ENCODE measurements at regions of chr2 and their contacts with region 1.

Region 1: DNA sequence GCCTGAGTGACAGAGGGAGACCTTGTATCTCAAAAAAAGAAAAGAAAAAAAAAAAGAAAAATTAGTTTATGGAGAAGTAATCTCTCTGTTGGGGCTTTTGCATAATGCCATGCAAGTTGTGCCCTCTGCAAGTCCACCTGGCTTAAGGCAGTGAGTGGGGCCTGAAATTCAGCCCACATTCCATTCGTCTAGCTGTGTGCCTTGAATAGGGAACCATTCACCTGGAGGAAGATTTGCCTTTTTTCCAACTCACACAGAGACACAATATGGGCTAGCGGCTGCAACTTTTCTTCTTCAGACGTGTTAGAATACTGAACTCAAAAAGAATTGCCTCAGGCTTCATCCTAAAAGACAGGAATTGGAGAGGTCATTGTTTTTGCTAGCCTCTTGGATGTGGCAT is 160.0 kb upstream of the STON1 start:
- DNase-seq: no peak
- H3K4me3 Mint-ChIP-seq: no peak overlapping the region
- H3K27ac Mint-ChIP-seq: no peak overlapping the region
- H3K4me1 Mint-ChIP-seq: peaks cover 12% of the 10 kb centered on the region
- H3K27me3 Mint-ChIP-seq: no peaks in the 10 kb centered on the region

Region 2: DNA sequence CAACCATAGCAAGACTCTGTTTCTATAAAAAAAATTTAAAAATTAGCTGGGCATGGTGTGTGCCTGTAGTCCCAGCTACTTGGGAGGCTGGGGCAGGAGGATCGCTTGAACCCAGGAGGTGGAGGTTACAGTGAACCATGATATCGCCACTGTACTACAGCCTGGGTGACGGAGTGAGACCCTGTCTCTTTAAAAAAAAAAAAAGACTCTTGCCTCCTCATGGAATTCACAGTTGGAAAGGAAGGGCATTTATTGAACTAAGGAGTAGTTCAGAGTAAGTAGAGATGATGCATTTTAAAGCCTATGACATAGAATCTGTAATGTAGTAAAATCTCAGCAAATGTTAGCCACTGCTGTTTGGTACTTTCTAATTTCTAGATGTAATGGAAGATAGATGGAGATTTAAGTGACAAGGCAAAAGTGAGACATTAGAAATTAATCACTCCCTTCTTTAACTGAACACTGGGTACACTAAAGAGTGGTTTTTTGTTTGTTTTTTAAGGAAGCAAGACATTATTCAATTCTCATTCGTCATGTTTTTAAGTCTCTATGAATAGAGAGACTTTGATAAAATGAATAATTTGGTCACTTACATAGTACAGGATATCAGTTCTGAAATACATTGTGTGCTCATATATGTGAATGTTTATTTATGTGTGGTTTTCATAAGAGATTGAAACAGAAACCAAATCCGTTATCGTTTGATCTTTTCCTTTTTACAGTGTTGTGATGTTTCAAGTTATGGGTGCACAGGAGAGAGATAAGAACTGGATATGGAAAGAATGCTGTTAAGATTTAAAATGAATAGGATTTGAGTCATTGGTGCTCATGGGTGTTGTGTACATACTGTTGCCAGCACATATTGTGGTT is 26.2 kb before region 1 on chr2:
- CTCF ChIA-PET with region 1: no interaction called
- intact Hi-C with region 1: no loop called
- DNase-seq: no peak
- H3K4me3 Mint-ChIP-seq: peak overlapping the region; percentile 8
- H3K27ac Mint-ChIP-seq: peak overlapping the region; percentile 47
- H3K4me1 Mint-ChIP-seq: peaks cover 37% of the 10 kb centered on the region
- H3K27me3 Mint-ChIP-seq: no peaks in the 10 kb centered on the region

Region 3: GRCh38 chr2:48356701-48357325 is 13.2 kb before region 1 on chr2:
- CTCF ChIA-PET with region 1: no interaction called
- intact Hi-C with region 1: loop called (anchors 2 kb)
- DNase-seq: peak; percentile 40
- H3K4me3 Mint-ChIP-seq: peak overlapping the region; percentile 54
- H3K27ac Mint-ChIP-seq: peak overlapping the region; percentile 87
- H3K4me1 Mint-ChIP-seq: peaks cover 55% of the 10 kb centered on the region
- H3K27me3 Mint-ChIP-seq: no peaks in the 10 kb centered on the region

Region 4: GRCh38 chr2:48383046-48383445 is 13.1 kb after region 1 on chr2:
- CTCF ChIA-PET with region 1: no interaction called
- intact Hi-C with region 1: no loop called
- DNase-seq: no peak
- H3K4me3 Mint-ChIP-seq: no peak overlapping the region
- H3K27ac Mint-ChIP-seq: no peak overlapping the region
- H3K4me1 Mint-ChIP-seq: no peaks in the 10 kb centered on the region
- H3K27me3 Mint-ChIP-seq: no peaks in the 10 kb centered on the region

Region 5: DNA sequence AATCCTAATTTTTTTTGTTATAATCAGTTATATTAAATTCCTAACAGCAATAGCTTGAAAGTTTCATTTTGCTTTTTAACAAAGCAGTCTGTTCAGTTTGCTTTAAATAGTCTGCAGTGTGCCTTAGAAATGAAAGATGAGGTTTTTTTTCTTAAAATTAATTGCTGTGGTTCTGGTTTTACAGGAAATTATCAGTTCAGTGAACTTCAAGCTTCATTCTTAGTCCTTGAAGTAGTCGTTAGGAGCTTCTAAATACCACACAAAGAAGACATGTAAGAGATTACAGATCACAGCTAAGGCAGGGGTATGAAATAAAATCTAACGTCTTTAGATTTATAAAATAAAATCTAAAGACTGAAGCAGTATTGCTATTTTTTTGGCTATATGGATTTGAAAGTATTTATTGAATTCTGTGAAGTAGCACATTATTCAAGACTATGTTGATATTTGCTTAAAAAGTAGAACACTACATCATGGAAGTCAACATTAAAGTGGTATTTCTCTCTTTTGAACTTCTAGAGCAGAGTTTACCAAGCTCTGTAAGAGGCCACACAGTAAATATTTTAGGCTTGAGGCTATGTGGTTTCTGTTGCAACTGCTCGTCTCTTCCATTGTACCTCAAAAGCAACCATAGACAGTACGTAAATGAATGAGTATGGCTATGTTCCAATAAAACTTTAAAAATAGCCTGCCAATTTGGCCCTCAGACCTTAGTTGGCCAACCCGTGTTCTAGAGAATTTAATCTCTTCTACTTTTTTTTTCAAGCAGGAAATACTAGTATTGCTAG is 78.5 kb after region 1 on chr2:
- CTCF ChIA-PET with region 1: no interaction called
- intact Hi-C with region 1: no loop called
- DNase-seq: no peak
- H3K4me3 Mint-ChIP-seq: peak overlapping the region; percentile 46
- H3K27ac Mint-ChIP-seq: peak overlapping the region; percentile 84
- H3K4me1 Mint-ChIP-seq: peaks cover 48% of the 10 kb centered on the region
- H3K27me3 Mint-ChIP-seq: no peaks in the 10 kb centered on the region

Region 6: DNA sequence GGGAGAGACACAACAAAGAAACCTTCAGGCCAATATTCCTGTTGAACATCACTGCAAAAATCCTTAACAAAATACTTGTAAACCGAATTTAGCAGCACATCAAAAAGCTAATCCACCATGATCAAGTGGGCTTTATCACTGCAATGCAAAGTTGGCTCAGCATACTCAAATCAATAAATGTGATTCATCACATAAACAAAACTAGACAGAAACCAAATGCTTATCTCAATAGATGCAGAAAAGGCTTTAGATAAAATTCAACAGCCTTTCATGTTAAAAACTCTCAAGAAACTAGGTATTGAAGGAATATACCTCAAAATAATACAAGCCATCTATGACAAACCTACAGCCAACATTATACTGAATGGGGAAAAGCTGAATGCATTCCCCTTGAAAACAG is 268.3 kb after region 1 on chr2:
- CTCF ChIA-PET with region 1: no interaction called
- intact Hi-C with region 1: no loop called
- DNase-seq: no peak
- H3K4me3 Mint-ChIP-seq: no peak overlapping the region
- H3K27ac Mint-ChIP-seq: no peak overlapping the region
- H3K4me1 Mint-ChIP-seq: no peaks in the 10 kb centered on the region
- H3K27me3 Mint-ChIP-seq: peaks cover 17% of the 10 kb centered on the region